PC-9 (cell line): ENCODE measurements at regions of chr7 and their contacts with region 1.

Region 1: GRCh38 chr7:112206238-112207044 is at the starts of genes DOCK4 and ZNF277:
- DNase-seq: peak; percentile 95 to 100
- H3K4me3 ChIP-seq: peak within 1 kb of the TSS; percentile 66
- H3K27ac ChIP-seq: no peak within 1 kb of the TSS
- H3K4me1 ChIP-seq: peaks cover 19% of the 10 kb centered on the region
- H3K27me3 ChIP-seq: no peaks in the 10 kb centered on the region
- CTCF ChIP-seq: no peak
- total RNA-seq, gene DOCK4: 0.98 and 1.7 TPM in 2 replicates
- total RNA-seq, gene ZNF277: 23.3 and 33.4 TPM in 2 replicates

Region 2: DNA sequence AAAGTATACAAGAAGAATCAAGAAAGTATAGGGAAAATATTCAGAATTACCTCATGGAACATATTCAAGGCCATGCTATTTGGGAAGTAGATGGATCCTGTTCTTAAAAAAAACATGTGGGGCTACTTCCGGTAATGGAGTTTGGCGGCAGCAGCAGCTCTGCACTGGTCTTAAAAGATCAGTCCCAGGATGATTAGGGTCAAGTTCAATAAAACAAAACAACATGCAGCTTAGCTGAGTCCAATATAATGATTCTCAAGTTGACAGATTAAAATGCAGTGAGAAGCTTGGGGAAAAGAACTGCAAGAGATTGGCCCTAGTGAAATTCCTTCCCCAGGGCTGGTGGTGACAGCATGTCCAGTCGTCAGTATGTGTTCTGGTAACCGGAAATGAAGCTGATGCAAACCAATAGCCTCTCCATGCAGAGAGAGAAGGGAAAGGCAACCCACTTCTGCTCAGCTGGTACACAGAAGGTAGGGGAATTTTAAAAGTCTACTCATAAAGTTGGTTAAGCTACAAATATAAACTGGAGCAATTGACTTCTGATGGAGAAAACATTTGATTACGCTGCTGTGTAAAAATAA is 339.0 kb before region 1 on chr7:
- CTCF ChIA-PET with region 1: no interaction called
- POLR2A ChIA-PET with region 1: no interaction called
- intact Hi-C with region 1: loop called (anchors 10 kb)
- DNase-seq: no peak
- H3K4me3 ChIP-seq: no peak overlapping the region
- H3K27ac ChIP-seq: no peak overlapping the region
- H3K4me1 ChIP-seq: no peaks in the 10 kb centered on the region
- H3K27me3 ChIP-seq: no peaks in the 10 kb centered on the region
- CTCF ChIP-seq: no peak

Region 3: GRCh38 chr7:112080441-112080840 is 126.0 kb before region 1 on chr7:
- CTCF ChIA-PET with region 1: no interaction called
- POLR2A ChIA-PET with region 1: no interaction called
- intact Hi-C with region 1: loop called (anchors 5 kb)
- DNase-seq: peak; percentile 35 to 45
- H3K4me3 ChIP-seq: no peak overlapping the region
- H3K27ac ChIP-seq: no peak overlapping the region
- H3K4me1 ChIP-seq: no peaks in the 10 kb centered on the region
- H3K27me3 ChIP-seq: no peaks in the 10 kb centered on the region
- CTCF ChIP-seq: no peak

Region 4: DNA sequence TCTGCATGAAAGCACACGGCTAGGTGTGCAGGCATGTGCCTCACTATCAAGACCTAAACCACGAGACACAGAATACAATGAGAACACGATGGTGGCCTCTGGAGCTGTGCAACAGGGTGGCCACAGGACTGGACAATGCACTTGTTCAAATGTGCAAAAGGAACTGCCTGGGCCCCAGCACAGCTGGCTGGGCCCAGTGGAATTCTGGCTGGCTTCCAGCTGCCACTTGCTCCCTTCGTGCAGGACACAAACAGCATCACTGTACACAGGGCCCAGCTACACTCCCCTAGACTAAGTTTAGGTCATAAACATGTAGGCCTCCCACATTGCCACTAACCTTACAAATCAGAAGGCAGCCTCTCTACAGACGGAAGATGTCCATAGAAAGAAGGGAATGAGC is 23.7 kb before region 1 on chr7:
- CTCF ChIA-PET with region 1: no interaction called
- POLR2A ChIA-PET with region 1: no interaction called
- intact Hi-C with region 1: no loop called
- DNase-seq: no peak
- H3K4me3 ChIP-seq: no peak overlapping the region
- H3K27ac ChIP-seq: no peak overlapping the region
- H3K4me1 ChIP-seq: no peaks in the 10 kb centered on the region
- H3K27me3 ChIP-seq: no peaks in the 10 kb centered on the region
- CTCF ChIP-seq: no peak

Region 5: DNA sequence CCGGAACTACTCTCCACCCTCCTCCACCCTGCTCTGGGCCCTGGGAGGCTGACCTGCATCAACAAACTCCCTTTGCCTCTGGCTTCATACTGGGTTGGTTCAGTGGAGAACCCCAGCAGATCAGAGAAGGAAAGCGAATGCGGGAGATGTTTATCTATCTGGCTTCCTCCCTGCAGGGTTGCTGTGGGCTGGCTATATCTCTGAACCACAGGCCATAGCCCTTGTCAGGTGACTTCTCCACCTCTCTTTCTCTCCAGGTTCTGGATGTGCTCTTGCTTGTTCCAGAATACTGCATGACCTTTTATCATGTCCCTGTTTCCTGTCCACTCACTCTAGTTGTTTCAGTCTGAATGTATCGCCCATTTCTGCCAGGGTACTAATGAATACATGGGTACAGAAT is 192.1 kb after region 1 on chr7:
- CTCF ChIA-PET with region 1: no interaction called
- POLR2A ChIA-PET with region 1: no interaction called
- intact Hi-C with region 1: loop called (anchors 10 kb)
- DNase-seq: no peak
- H3K4me3 ChIP-seq: no peak overlapping the region
- H3K27ac ChIP-seq: no peak overlapping the region
- H3K4me1 ChIP-seq: no peaks in the 10 kb centered on the region
- H3K27me3 ChIP-seq: no peaks in the 10 kb centered on the region
- CTCF ChIP-seq: no peak

Region 6: DNA sequence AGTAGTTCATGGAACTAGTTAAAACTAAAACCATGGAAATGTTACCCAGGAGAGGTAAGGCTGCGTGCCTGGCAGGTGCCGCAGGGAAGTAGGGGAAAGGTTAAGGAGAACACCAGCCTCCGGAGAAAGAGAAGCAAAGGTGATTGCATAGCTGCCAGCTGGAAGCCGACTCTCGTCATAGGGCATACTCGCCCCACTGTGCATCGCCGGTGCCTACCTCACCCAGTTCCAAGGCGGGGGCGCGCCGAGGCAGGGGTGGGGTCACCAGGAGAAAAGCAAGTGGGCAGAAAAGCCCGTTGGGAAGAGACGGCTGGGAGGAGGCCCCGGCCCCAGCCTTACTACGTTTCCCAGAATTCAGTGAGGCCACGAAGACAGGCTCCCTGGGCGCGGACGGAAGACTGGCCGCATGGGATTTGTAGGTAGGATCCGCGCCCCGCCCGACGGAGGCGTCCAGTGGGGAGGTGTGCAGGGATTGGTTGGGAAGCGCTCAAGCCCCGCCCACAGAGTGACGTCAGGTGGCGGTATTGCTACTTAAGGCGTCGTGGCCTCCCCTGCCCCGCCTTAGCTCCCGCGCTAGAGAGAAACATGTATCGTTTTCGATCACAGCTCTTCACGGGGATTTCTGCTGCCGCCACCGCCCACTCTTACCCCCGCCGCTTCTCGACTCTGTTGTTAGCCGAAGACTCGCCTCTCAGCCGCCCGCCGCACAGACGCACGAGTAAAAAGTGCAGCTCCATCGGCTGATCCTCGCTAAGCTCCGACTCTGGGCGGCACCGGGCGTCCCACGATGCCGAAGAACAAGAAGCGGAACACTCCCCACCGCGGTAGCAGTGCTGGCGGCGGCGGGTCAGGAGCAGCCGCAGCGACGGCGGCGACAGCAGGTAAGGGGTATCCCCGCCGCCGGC is 243.7 kb after region 1 on chr7 and contains the start of gene IFRD1:
- CTCF ChIA-PET with region 1: no interaction called
- POLR2A ChIA-PET with region 1: interaction called, 6 read pairs
- intact Hi-C with region 1: loop called (anchors 1 kb)
- DNase-seq: peak; percentile 94 to 99
- H3K4me3 ChIP-seq: peak within 1 kb of the TSS; percentile 100
- H3K27ac ChIP-seq: peak within 1 kb of the TSS; percentile 83
- H3K4me1 ChIP-seq: peaks cover 31% of the 10 kb centered on the region
- H3K27me3 ChIP-seq: no peaks in the 10 kb centered on the region
- CTCF ChIP-seq: no peak
- total RNA-seq, gene IFRD1: 79.6 and 89.4 TPM in 2 replicates